K562 (cell line): ENCODE measurements at regions of chr9 and their contacts with region 1.

Region 1: DNA sequence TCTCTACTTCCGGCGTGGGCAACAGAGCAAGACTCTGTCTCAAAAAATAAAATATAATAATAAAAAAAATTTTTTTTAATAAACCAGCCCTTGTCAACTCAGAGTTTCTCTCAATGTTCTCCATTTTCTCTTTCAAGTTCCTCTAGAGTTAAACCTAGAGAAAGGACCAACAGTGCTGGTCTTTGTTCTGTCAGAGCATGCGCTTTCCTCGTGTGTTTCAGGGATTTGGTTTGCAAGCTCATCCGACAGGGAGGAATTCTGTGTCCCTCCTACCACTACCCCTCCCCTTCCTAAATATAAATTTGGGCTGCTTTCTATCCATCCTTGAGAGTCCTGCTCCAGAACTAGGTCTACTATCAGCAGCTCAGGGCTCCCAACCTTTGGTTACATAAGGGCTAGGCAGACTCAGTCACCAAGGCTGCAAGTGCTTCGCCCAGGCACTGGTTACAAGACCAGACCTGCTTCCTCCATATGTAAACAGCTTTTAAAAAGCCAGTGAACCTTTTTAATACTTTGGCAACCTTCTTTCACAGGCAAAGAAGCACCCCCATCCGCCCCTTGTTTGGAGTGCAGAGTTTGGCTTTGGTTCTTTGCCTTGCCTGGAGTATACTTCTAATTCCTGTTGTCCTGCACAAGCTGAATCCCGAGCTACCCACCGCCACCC is 13.5 kb downstream of the SETX start:
- DNase-seq: no peak
- ATAC-seq: no peak
- H3K4me3 ChIP-seq: no peak overlapping the region
- H3K27ac ChIP-seq: no peak overlapping the region
- H3K4me1 ChIP-seq: no peaks in the 10 kb centered on the region
- H3K27me3 ChIP-seq: no peaks in the 10 kb centered on the region
- CTCF ChIP-seq: no peak
- EP300 ChIP-seq: no peak
- POLR2A ChIP-seq: no peak
- RAD21 ChIP-seq: no peak

Region 2: GRCh38 chr9:132354637-132355355 is 13.5 kb after region 1 on chr9 and contains the start of gene SETX:
- CTCF ChIA-PET with region 1: no interaction called
- POLR2A ChIA-PET with region 1: interaction called, 10 read pairs
- in situ Hi-C with region 1: no loop called
- intact Hi-C with region 1: no loop called
- DNase-seq: peak; percentile 98 to 99 (median 99)
- ATAC-seq: peak; percentile 98
- H3K4me3 ChIP-seq: peak within 1 kb of the TSS; percentile 81
- H3K27ac ChIP-seq: peak within 1 kb of the TSS; percentile 93
- H3K4me1 ChIP-seq: peaks cover 15 to 21% of the 10 kb centered on the region in 2 experiments; a peak in 4 of 5 replicates
- H3K27me3 ChIP-seq: no peaks in the 10 kb centered on the region
- CTCF ChIP-seq: no peak
- EP300 ChIP-seq: 0 out of 2 replicates have a peak, but pooled peaks have one; percentile 5
- POLR2A ChIP-seq: peak; percentile 92
- RAD21 ChIP-seq: no peak
- polyA plus RNA-seq, gene SETX: 8.7 to 11.5 TPM